Endothelial cell of umbilical vein (primary cell): ENCODE measurements at regions of chr7 and their contacts with region 1.

Region 1: DNA sequence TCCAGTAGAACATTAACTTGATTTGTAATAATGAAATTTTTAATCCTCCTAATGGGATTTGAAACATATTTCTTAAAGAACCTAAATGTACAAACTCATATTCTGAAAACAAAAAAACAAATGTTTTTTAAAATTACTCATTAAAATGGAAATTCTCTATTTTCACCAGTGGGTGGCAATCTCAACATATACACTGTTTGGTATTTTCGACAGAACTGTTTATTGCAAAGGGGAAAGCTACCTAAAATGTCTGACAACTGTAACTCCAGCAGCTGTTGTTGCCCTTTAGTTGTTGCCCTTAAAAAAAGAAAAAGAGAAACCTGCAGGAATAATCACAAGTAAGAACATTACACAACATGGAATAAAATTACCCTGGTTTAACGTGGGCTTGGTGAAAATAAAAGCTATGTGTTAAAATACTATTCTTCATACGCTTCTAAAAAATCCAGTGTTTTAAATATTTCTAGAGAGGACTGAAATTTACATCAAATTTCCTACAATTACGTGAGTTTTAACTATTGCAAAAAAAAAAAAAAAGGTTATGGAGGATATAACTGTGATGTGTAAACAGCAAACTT is 54.5 kb downstream of the COL1A2 start:
- DNase-seq: peak; percentile 51
- H3K4me3 ChIP-seq: no peak overlapping the region
- H3K27ac ChIP-seq: no peak overlapping the region
- H3K4me1 ChIP-seq: peaks cover 3% of the 10 kb centered on the region
- H3K27me3 ChIP-seq: no peaks in the 10 kb centered on the region
- CTCF ChIP-seq: peak; percentile 27 to 38
- POLR2A ChIP-seq: no peak

Region 2: GRCh38 chr7:94295850-94296249 is 153.4 kb before region 1 on chr7:
- CTCF ChIA-PET with region 1: interaction called, 17 read pairs
- POLR2A ChIA-PET with region 1: no interaction called
- dilution Hi-C with region 1: loop called (anchors 25 kb)
- intact Hi-C with region 1: no loop called
- DNase-seq: peak; percentile 75
- H3K4me3 ChIP-seq: no peak overlapping the region
- H3K27ac ChIP-seq: no peak overlapping the region
- H3K4me1 ChIP-seq: peaks cover 2% of the 10 kb centered on the region
- H3K27me3 ChIP-seq: no peaks in the 10 kb centered on the region
- CTCF ChIP-seq: peak; percentile 35 to 50
- POLR2A ChIP-seq: no peak

Region 3: GRCh38 chr7:94466516-94466915 is 17.3 kb after region 1 on chr7:
- CTCF ChIA-PET with region 1: interaction called, 10 read pairs
- POLR2A ChIA-PET with region 1: no interaction called
- dilution Hi-C with region 1: no loop called
- intact Hi-C with region 1: no loop called
- DNase-seq: no peak
- H3K4me3 ChIP-seq: no peak overlapping the region
- H3K27ac ChIP-seq: no peak overlapping the region
- H3K4me1 ChIP-seq: no peaks in the 10 kb centered on the region
- H3K27me3 ChIP-seq: no peaks in the 10 kb centered on the region
- CTCF ChIP-seq: no peak
- POLR2A ChIP-seq: no peak

Region 4: GRCh38 chr7:94697035-94697974 is 248.1 kb after region 1 on chr7:
- CTCF ChIA-PET with region 1: interaction called, 7 read pairs
- POLR2A ChIA-PET with region 1: no interaction called
- dilution Hi-C with region 1: no loop called
- intact Hi-C with region 1: loop called (anchors 5 kb)
- DNase-seq: peak; percentile 90
- H3K4me3 ChIP-seq: no peak overlapping the region
- H3K27ac ChIP-seq: peak overlapping the region; percentile 83
- H3K4me1 ChIP-seq: peaks cover 43% of the 10 kb centered on the region
- H3K27me3 ChIP-seq: no peaks in the 10 kb centered on the region
- CTCF ChIP-seq: no peak
- POLR2A ChIP-seq: no peak

Region 5: DNA sequence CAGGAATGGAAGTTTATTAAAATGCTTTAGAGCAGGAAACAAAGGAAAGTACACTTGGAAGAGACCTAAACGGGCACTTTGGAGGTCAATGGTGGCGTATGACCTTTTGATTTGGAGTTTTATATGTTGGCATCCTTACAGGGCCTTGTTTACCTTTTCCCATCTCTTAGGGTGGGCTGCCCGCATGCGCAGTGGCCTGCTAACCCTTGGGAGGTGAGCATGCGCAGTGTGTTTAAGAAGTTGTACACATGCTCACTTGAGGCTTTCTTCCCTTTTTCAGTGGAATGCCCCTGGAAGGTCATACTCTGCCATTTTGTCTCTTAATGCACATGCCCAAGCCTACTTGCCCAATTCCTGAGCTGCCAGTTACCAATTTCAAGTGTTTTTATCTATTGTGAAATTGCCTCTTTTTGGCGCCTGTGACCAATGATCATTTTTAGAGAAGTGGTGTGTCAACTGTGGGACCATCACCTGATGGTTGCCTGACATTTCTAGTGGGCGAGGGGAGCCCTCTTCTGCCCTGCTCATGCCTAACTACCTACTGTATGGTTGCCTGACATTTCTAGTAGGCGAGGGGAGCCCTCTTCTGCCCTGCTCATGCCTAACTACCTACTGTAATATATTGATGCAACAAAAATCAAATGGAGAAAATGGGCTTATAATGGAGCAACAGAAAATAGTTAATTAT is 596.1 kb after region 1 on chr7:
- CTCF ChIA-PET with region 1: interaction called, 28 read pairs
- POLR2A ChIA-PET with region 1: no interaction called
- dilution Hi-C with region 1: no loop called
- intact Hi-C with region 1: loop called (anchors 1 kb)
- DNase-seq: peak; percentile 45
- H3K4me3 ChIP-seq: no peak overlapping the region
- H3K27ac ChIP-seq: no peak overlapping the region
- H3K4me1 ChIP-seq: no peaks in the 10 kb centered on the region
- H3K27me3 ChIP-seq: no peaks in the 10 kb centered on the region
- CTCF ChIP-seq: peak; percentile 10 to 27
- POLR2A ChIP-seq: no peak

Region 6: GRCh38 chr7:95238252-95238943 is 789.2 kb after region 1 on chr7:
- CTCF ChIA-PET with region 1: interaction called, 15 read pairs
- POLR2A ChIA-PET with region 1: no interaction called
- dilution Hi-C with region 1: no loop called
- intact Hi-C with region 1: no loop called
- DNase-seq: no peak
- H3K4me3 ChIP-seq: no peak overlapping the region
- H3K27ac ChIP-seq: no peak overlapping the region
- H3K4me1 ChIP-seq: no peaks in the 10 kb centered on the region
- H3K27me3 ChIP-seq: no peaks in the 10 kb centered on the region
- CTCF ChIP-seq: no peak
- POLR2A ChIP-seq: no peak

Region 7: GRCh38 chr7:95476904-95477594 is 1027.8 kb after region 1 on chr7:
- CTCF ChIA-PET with region 1: interaction called, 131 read pairs
- POLR2A ChIA-PET with region 1: no interaction called
- dilution Hi-C with region 1: no loop called
- intact Hi-C with region 1: loop called (anchors 1 kb)
- DNase-seq: peak; percentile 68
- H3K4me3 ChIP-seq: no peak overlapping the region
- H3K27ac ChIP-seq: no peak overlapping the region
- H3K4me1 ChIP-seq: no peaks in the 10 kb centered on the region
- H3K27me3 ChIP-seq: peaks cover 2 to 6% of the 10 kb centered on the region in 2 experiments
- CTCF ChIP-seq: peak; percentile 59 to 67
- POLR2A ChIP-seq: no peak